Activated naive CD4-positive, alpha-beta T cell treated with anti-CD3 and anti-CD28 coated beads for 36 hours (primary cell): ENCODE measurements at regions of chr16 and their contacts with region 1.

Region 1: DNA sequence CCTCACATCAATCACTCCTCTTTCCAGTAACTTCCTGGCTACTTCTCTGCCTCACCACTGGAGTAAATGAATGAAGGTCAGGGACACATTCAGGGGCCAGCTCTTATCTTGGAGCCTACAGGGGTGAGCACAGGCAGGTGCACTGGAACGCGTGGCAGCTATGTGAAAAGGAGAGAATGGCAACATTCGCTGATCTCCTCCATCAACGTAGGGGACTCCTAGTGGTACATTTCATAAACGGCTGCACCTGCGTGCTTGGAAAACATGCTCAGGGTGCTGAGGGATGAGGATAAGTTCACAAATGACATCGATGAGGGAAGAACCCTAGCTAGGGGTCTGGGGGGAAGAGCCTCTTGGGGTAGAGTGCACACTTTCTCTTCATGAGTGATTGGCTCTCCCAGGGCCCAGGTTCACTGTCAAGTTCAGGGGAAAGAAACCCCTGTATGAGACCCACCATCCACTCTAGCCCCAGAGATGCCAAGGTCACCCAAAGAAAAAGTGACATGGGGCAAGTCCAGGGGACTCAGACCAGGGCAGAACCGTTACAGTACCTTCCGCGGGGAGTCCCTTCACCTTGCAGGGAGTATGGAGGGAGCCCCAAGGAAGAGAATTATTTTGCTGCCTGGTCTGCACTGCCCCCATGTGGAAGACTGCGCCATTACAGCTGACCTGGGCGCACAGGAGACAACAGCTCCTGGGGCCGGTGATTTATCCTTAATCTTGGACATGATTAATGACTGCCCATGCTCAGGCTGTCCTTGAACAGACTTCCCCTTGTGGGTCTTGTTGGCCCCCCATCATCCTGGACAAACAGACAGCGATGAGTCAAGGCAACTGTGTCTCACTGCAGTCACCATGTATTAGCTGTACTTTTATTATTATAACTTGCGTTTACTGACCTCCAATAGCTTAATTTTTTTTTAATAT is 30.1 kb downstream of the VAC14 start:
- DNase-seq: peak; percentile 83
- H3K4me3 Mint-ChIP-seq: no peak overlapping the region
- H3K27ac Mint-ChIP-seq: no peak overlapping the region
- H3K4me1 Mint-ChIP-seq: peaks cover 3% of the 10 kb centered on the region
- H3K27me3 Mint-ChIP-seq: no peaks in the 10 kb centered on the region

Region 2: DNA sequence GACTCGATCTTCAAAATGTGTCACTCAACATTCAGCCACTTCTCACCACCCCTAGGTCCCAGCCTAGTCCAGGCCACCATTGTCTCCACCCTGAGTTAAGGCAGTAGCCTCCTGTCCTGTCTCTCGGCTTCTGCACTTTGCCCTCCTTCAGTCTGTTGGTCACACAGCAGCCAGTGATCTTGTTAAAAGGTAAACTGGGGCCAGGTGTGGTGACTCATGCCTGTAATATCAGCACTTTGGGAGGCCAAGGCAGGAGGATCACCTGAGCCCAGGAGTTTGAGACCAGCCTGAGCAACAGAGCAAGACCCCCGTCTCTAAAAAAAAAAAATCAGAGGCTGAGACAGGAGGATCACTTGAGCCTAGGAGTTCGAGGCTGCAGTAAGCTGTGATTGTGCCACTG is 983.0 kb before region 1 on chr16:
- CTCF ChIA-PET with region 1: no interaction called
- intact Hi-C with region 1: no loop called
- DNase-seq: no peak
- H3K4me3 Mint-ChIP-seq: no peak overlapping the region
- H3K27ac Mint-ChIP-seq: no peak overlapping the region
- H3K4me1 Mint-ChIP-seq: no peaks in the 10 kb centered on the region
- H3K27me3 Mint-ChIP-seq: no peaks in the 10 kb centered on the region

Region 3: GRCh38 chr16:70162041-70162451 is 608.8 kb before region 1 on chr16:
- CTCF ChIA-PET with region 1: no interaction called
- intact Hi-C with region 1: loop called (anchors 10 kb)
- DNase-seq: no peak
- H3K4me3 Mint-ChIP-seq: no peak overlapping the region
- H3K27ac Mint-ChIP-seq: peak overlapping the region; percentile 2
- H3K4me1 Mint-ChIP-seq: peaks cover 3% of the 10 kb centered on the region
- H3K27me3 Mint-ChIP-seq: no peaks in the 10 kb centered on the region

Region 4: GRCh38 chr16:70508752-70509151 is 262.1 kb before region 1 on chr16:
- CTCF ChIA-PET with region 1: no interaction called
- intact Hi-C with region 1: loop called (anchors 1 kb)
- DNase-seq: no peak
- H3K4me3 Mint-ChIP-seq: no peak overlapping the region
- H3K27ac Mint-ChIP-seq: no peak overlapping the region
- H3K4me1 Mint-ChIP-seq: peaks cover 2% of the 10 kb centered on the region
- H3K27me3 Mint-ChIP-seq: no peaks in the 10 kb centered on the region

Region 5: GRCh38 chr16:70695331-70696070 is 75.4 kb before region 1 on chr16:
- CTCF ChIA-PET with region 1: interaction called, 16 read pairs
- intact Hi-C with region 1: no loop called
- DNase-seq: peak; percentile 25
- H3K4me3 Mint-ChIP-seq: no peak overlapping the region
- H3K27ac Mint-ChIP-seq: no peak overlapping the region
- H3K4me1 Mint-ChIP-seq: peaks cover 32% of the 10 kb centered on the region
- H3K27me3 Mint-ChIP-seq: no peaks in the 10 kb centered on the region

Region 6: GRCh38 chr16:70706946-70707465 is 63.9 kb before region 1 on chr16:
- CTCF ChIA-PET with region 1: no interaction called
- intact Hi-C with region 1: no loop called
- DNase-seq: no peak
- H3K4me3 Mint-ChIP-seq: no peak overlapping the region
- H3K27ac Mint-ChIP-seq: no peak overlapping the region
- H3K4me1 Mint-ChIP-seq: no peaks in the 10 kb centered on the region
- H3K27me3 Mint-ChIP-seq: no peaks in the 10 kb centered on the region

Region 7: GRCh38 chr16:70746708-70747424 is 24.0 kb before region 1 on chr16:
- CTCF ChIA-PET with region 1: interaction called, 14 read pairs
- intact Hi-C with region 1: no loop called
- DNase-seq: peak; percentile 80
- H3K4me3 Mint-ChIP-seq: no peak overlapping the region
- H3K27ac Mint-ChIP-seq: peak overlapping the region; percentile 77
- H3K4me1 Mint-ChIP-seq: peaks cover 50% of the 10 kb centered on the region
- H3K27me3 Mint-ChIP-seq: no peaks in the 10 kb centered on the region